SK-N-SH (cell line): ENCODE measurements at regions of chr7 and their contacts with region 1.

Region 1: DNA sequence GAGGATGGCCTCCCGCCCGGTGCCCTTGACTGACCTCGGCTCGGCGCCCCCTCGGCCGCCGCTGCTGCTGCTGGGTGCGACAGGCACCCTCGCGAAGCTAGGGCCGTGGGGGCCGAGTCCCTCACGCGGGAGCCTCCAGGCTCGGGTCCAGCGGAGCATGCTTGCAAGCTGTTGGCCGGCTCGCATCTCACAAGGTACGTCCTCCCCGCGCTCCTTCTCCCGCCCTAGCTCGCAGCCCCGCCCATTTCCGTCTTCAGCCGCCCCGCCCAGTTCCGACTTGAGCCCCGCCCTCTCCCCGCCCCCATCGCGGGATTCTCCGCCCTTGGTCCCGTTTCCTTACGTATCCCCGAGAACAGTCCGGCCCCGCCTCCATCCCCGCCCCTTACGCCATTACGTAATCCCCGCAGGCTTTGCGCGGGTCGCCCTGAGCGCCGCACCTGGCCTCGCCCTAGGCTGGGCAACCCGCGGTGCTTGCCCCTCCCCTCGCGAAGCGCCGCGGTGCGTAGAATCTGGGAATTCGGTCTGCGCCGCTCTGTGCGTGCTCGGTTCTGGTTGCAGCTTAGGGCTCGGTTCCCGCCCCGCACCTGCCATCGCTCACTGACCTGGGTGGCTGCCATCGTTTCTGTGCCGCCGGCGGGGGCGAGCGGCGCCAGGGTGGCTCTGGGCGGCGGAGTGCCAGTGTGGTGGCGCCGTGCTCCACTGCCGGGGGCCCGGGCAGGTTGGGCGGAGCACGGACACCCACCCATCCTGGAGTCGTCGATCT is at the start of gene ABHD11:
- DNase-seq: peak; percentile 100
- H3K4me3 ChIP-seq: peak within 1 kb of the TSS; percentile 76 to 93
- H3K27ac ChIP-seq: peak within 1 kb of the TSS; percentile 82 to 87
- H3K4me1 ChIP-seq: peaks cover 7 to 13% of the 10 kb centered on the region in 2 experiments; a peak in 2 of 4 replicates
- H3K27me3 ChIP-seq: no peaks in the 10 kb centered on the region
- CTCF ChIP-seq: no peak; the same call in 1 of the 2 replicates
- EP300 ChIP-seq: no peak; a peak in 1 of 4 replicates
- RAD21 ChIP-seq: no peak
- polyA plus RNA-seq, gene ABHD11: 29.9 and 33.7 TPM in 2 replicates

Region 2: DNA sequence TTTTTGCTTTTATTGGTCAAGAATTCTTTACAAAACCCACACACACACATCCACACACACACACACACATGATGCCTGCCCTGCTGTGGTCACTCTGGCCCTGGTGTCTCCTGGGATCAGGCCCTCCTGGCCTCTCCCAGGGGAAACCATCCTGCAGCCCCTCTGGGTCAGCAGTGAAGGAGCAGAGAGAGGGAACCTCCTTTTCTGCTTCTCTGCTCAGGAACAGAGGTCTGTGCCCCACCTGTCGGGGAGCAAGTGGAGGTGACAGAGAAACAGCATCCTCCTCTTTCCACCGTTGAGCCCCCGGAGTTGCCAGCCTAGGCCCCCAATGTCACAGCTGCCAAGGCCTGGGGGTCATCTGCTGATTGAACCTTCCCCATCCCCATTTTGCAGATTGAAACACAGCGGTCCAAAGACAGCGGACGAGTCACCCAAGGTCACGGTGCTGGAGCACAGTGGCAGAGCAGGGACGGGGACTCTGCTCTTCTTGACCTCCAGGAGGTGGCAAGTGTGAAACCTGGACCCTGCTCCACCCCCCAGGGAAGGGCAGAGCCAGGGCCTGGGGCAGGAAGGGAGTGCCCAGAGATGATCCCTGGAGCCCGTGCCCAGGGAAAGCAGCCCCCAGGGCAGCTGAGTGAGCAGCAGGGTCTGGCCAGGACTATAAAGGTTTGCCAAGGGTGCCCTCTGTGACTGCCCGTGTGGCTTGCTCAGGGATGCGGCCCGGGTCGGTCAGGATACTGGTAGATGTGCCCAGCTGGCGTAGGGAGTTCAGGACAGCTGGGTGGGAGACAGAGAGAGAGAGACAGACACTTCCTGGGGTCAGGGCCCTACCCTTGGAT is 145.4 kb before region 1 on chr7:
- CTCF ChIA-PET with region 1: interaction called, 12 read pairs
- POLR2A ChIA-PET with region 1: no interaction called
- DNase-seq: no peak
- H3K4me3 ChIP-seq: no peak overlapping the region
- H3K27ac ChIP-seq: no peak overlapping the region
- H3K4me1 ChIP-seq: no peaks in the 10 kb centered on the region
- H3K27me3 ChIP-seq: peaks cover 4% of the 10 kb centered on the region; the same call in 1 of the 2 replicates
- CTCF ChIP-seq: no peak
- EP300 ChIP-seq: no peak
- RAD21 ChIP-seq: no peak

Region 3: GRCh38 chr7:73647725-73648592 is 90.8 kb before region 1 on chr7:
- CTCF ChIA-PET with region 1: interaction called, 12 read pairs
- POLR2A ChIA-PET with region 1: no interaction called
- DNase-seq: peak; percentile 87
- H3K4me3 ChIP-seq: peak overlapping the region; percentile 40 to 41
- H3K27ac ChIP-seq: no peak overlapping the region
- H3K4me1 ChIP-seq: peaks cover 0 to 2% of the 10 kb centered on the region in 2 experiments; a peak in 1 of 4 replicates
- H3K27me3 ChIP-seq: peaks cover 93% of the 10 kb centered on the region
- CTCF ChIP-seq: peak; percentile 25
- EP300 ChIP-seq: no peak
- RAD21 ChIP-seq: peak; percentile 15; the same call in 1 of the 2 replicates

Region 4: GRCh38 chr7:73701357-73701995 is 37.3 kb before region 1 on chr7:
- CTCF ChIA-PET with region 1: interaction called, 15 read pairs
- POLR2A ChIA-PET with region 1: no interaction called
- DNase-seq: peak; percentile 92
- H3K4me3 ChIP-seq: no peak overlapping the region
- H3K27ac ChIP-seq: no peak overlapping the region; a peak in 1 of 4 replicates
- H3K4me1 ChIP-seq: peaks cover 0 to 25% of the 10 kb centered on the region in 2 experiments; a peak in 3 of 4 replicates
- H3K27me3 ChIP-seq: no peaks in the 10 kb centered on the region
- CTCF ChIP-seq: peak; percentile 83
- EP300 ChIP-seq: no peak
- RAD21 ChIP-seq: peak; percentile 53

Region 5: DNA sequence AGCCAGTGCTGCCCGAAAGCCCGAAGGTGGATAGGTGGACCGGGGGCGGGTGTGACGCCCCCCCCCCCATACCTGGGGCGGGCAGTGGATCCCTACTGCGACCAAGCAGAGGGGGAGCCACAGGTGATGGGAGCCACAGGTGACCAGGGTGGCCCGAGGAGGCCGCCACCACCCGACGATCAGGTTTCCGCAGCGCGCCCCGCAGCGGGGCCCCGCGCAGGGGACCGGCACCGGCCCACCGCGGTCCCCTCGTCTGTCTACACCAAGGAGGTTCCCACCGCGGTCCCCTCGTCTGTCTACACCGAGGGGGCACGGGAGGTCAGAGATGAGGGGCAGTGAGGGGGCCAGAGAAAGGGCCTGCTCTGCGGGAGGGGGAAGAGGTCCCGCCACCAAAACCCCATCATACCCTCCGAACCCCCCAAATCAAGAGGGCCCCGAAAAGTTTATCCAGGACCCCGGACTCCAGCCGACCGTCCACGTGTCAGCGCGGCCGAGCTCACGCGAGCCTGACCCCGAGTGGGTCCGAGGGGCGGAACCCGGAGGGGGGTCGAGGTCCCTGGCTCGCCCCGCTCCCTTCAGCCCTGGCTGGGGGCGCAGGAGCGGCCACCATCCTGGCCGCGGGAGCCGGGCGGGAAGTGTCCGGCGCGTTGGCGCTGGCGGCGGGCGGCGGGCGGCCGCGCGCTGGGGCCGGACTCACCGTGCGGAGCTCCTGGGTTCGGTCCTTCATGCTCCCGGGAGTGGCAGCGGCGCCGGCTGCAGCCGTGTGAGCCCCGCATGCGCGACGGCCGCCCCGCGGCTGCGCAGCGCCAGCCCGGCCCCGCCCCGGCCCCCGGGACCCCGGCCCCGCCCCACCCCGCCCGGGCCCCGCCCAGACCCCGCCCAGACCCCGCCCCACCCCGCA is 19.6 kb before region 1 on chr7 and contains the start of gene STX1A:
- CTCF ChIA-PET with region 1: interaction called, 89 read pairs
- POLR2A ChIA-PET with region 1: interaction called, 5 read pairs
- DNase-seq: peak; percentile 100
- H3K4me3 ChIP-seq: peak within 1 kb of the TSS; percentile 75 to 87
- H3K27ac ChIP-seq: peak within 1 kb of the TSS; percentile 12 to 88; a peak in 3 of 4 replicates
- H3K4me1 ChIP-seq: peaks cover 23 to 38% of the 10 kb centered on the region in 2 experiments; a peak in 3 of 4 replicates
- H3K27me3 ChIP-seq: no peaks in the 10 kb centered on the region
- CTCF ChIP-seq: no peak
- EP300 ChIP-seq: no peak
- RAD21 ChIP-seq: no peak
- polyA plus RNA-seq, gene STX1A: 81.2 and 91.1 TPM in 2 replicates